Mammary epithelial cell (primary cell): ENCODE measurements at regions of chr10 and their contacts with region 1.

Region 1: GRCh38 chr10:52313933-52314816 is at the start of gene DKK1:
- DNase-seq: peak; percentile 87
- H3K4me3 ChIP-seq: peak within 1 kb of the TSS; percentile 90 to 99 (median 91)
- H3K27ac ChIP-seq: peak within 1 kb of the TSS; percentile 77
- H3K4me1 ChIP-seq: peaks cover 29% of the 10 kb centered on the region
- H3K27me3 ChIP-seq: no peaks in the 10 kb centered on the region
- CTCF ChIP-seq: peak; percentile 64 to 90
- total RNA-seq, gene DKK1: 157 to 161 TPM

Region 2: GRCh38 chr10:52334595-52334994 is 20.4 kb after region 1 on chr10:
- CTCF ChIA-PET with region 1: no interaction called
- dilution Hi-C with region 1: no loop called
- in situ Hi-C with region 1: no loop called
- intact Hi-C with region 1: loop called (anchors 2 kb)
- DNase-seq: peak; percentile 57
- H3K4me3 ChIP-seq: no peak overlapping the region
- H3K27ac ChIP-seq: peak overlapping the region; percentile 76
- H3K4me1 ChIP-seq: peaks cover 27% of the 10 kb centered on the region
- H3K27me3 ChIP-seq: no peaks in the 10 kb centered on the region
- CTCF ChIP-seq: no peak

Region 3: GRCh38 chr10:52443419-52444388 is 129.5 kb after region 1 on chr10:
- CTCF ChIA-PET with region 1: interaction called, 6 read pairs
- dilution Hi-C with region 1: no loop called
- in situ Hi-C with region 1: loop called in 1 of 2 experiments (anchors 5 kb)
- intact Hi-C with region 1: loop called (anchors 1 kb)
- DNase-seq: peak; percentile 98
- H3K4me3 ChIP-seq: peak overlapping the region in 1 of 3 experiments; percentile 25
- H3K27ac ChIP-seq: peak overlapping the region; percentile 96
- H3K4me1 ChIP-seq: peaks cover 39% of the 10 kb centered on the region
- H3K27me3 ChIP-seq: no peaks in the 10 kb centered on the region
- CTCF ChIP-seq: no peak

Region 4: GRCh38 chr10:52474265-52474664 is 160.1 kb after region 1 on chr10:
- CTCF ChIA-PET with region 1: no interaction called
- dilution Hi-C with region 1: loop called (anchors 10 kb)
- in situ Hi-C with region 1: no loop called
- intact Hi-C with region 1: loop called (anchors 1 kb)
- DNase-seq: no peak
- H3K4me3 ChIP-seq: no peak overlapping the region
- H3K27ac ChIP-seq: no peak overlapping the region
- H3K4me1 ChIP-seq: peaks cover 10% of the 10 kb centered on the region
- H3K27me3 ChIP-seq: no peaks in the 10 kb centered on the region
- CTCF ChIP-seq: no peak

Region 5: DNA sequence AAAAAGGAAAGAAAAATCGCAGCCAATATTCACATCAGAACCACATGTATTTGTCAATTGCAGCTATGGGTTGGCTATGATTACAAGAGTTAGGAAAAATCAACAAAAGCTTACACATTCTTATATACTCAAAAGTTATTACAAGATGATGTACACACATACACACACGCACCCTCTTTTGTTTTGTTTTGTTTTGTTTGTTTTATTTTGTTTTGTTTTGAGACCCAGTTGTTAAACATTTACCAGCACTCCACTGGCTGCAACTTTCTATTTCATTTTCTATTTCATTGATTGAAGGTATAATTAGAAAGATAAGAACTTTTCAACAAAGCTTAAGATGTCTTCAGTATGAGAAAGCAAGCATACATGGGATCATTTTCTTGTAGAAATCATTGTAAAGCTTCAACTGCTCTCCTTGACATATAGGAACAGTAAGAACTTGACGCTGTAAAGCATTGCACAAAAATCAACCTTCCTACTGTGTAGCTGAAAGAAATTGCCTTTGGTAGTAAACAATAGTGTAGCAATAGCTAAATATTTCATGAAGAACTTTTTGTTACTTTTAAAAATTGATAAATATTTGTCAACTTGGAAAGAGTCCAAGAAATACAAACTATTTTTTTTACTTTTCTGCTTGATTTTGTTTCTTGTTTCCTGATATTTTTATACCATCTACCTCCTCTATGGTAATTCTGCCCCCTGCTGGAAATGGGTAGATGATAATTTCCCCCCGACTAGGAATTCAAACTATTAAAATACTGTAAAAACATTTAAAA is 252.5 kb after region 1 on chr10:
- CTCF ChIA-PET with region 1: no interaction called
- dilution Hi-C with region 1: loop called (anchors 25 kb)
- in situ Hi-C with region 1: loop called (anchors 5 kb)
- intact Hi-C with region 1: no loop called
- DNase-seq: peak; percentile 35
- H3K4me3 ChIP-seq: no peak overlapping the region
- H3K27ac ChIP-seq: no peak overlapping the region
- H3K4me1 ChIP-seq: peaks cover 4% of the 10 kb centered on the region
- H3K27me3 ChIP-seq: no peaks in the 10 kb centered on the region
- CTCF ChIP-seq: peak; percentile 55 to 68

Region 6: GRCh38 chr10:53909791-53910190 is 1595.6 kb after region 1 on chr10:
- CTCF ChIA-PET with region 1: no interaction called
- dilution Hi-C with region 1: no loop called
- in situ Hi-C with region 1: no loop called
- intact Hi-C with region 1: no loop called
- DNase-seq: no peak
- H3K4me3 ChIP-seq: no peak overlapping the region
- H3K27ac ChIP-seq: no peak overlapping the region
- H3K4me1 ChIP-seq: peaks cover 7% of the 10 kb centered on the region
- H3K27me3 ChIP-seq: no peaks in the 10 kb centered on the region
- CTCF ChIP-seq: no peak